ENCODE measurements at regions of chr4 and their contacts with region 1.

Region 1: DNA sequence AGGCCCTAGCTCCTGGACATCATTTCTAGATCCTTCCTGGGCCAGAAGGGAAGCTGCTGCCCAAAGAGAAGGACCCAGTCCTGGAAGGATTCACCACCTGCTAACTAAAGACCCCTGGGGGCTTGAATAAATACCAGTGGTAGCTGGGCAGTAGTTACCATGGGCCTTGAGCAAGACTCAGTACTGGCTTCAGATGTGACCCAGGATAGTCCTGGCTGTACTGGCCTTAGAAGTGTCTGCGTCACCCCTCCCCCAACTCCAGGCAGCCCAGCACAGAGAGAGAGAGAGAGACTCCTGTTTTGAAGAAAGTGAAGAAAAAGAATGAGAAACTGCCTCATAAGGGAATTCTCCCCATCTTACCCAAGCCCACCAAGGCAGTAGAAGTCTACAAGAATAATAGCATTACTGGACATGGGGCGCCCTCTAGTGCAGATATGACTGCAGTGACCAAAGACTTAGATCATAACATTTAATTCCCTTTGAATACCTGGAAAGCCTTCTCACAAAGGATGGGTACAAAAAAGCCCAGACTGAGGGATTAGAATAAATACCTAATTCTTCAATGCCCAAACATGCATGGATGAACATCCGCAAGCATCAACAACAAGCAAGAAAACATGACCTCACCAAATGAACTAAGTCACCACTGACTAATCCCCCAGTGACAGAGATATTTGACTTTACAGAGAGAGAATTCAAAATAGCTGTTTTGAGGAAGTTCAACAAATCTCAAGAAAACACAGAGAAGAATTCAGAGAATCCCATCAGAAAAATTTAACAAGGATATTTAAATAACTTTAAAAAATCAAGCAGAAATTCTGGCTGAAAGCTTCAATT is 171.8 kb downstream of the HNRNPD start:
- DNase-seq: peak; percentile 59
- H3K4me3 ChIP-seq: no peak overlapping the region
- H3K27ac ChIP-seq: no peak overlapping the region
- H3K4me1 ChIP-seq: no peaks in the 10 kb centered on the region
- H3K27me3 ChIP-seq: no peaks in the 10 kb centered on the region
- CTCF ChIP-seq: peak; percentile 56 to 58
- POLR2A ChIP-seq: no peak

Region 2: GRCh38 chr4:81405894-81406401 is 796.1 kb before region 1 on chr4:
- CTCF ChIA-PET with region 1: interaction called, 4 read pairs
- POLR2A ChIA-PET with region 1: no interaction called
- dilution Hi-C with region 1: no loop called
- intact Hi-C with region 1: loop called (anchors 1 kb)
- DNase-seq: peak; percentile 72
- H3K4me3 ChIP-seq: no peak overlapping the region
- H3K27ac ChIP-seq: no peak overlapping the region
- H3K4me1 ChIP-seq: no peaks in the 10 kb centered on the region
- H3K27me3 ChIP-seq: no peaks in the 10 kb centered on the region
- CTCF ChIP-seq: peak; percentile 32 to 33
- POLR2A ChIP-seq: no peak

Region 3: DNA sequence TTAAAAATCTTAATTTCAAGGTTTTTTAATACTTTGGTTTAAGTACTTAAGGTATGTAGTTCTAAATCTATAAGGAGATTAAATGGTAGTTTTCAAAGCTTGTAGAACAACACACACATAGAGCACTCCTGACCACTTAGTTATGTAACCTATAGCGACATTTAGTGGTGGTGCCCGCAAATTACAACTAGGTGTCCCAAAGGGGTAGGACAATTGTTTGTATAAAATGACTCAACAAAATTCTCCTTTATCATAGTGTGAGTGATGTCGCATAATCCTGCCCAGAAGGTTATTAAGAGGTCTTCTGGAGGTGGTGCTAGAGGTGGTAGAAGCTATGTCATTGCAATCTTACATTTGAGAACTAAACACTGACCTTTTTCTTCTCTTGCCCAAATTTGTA is 357.3 kb before region 1 on chr4:
- CTCF ChIA-PET with region 1: no interaction called
- POLR2A ChIA-PET with region 1: no interaction called
- dilution Hi-C with region 1: no loop called
- intact Hi-C with region 1: loop called (anchors 2 kb)
- DNase-seq: peak; percentile 79
- H3K4me3 ChIP-seq: no peak overlapping the region
- H3K27ac ChIP-seq: no peak overlapping the region
- H3K4me1 ChIP-seq: no peaks in the 10 kb centered on the region
- H3K27me3 ChIP-seq: no peaks in the 10 kb centered on the region
- CTCF ChIP-seq: peak; percentile 55 to 57
- POLR2A ChIP-seq: no peak

Region 4: DNA sequence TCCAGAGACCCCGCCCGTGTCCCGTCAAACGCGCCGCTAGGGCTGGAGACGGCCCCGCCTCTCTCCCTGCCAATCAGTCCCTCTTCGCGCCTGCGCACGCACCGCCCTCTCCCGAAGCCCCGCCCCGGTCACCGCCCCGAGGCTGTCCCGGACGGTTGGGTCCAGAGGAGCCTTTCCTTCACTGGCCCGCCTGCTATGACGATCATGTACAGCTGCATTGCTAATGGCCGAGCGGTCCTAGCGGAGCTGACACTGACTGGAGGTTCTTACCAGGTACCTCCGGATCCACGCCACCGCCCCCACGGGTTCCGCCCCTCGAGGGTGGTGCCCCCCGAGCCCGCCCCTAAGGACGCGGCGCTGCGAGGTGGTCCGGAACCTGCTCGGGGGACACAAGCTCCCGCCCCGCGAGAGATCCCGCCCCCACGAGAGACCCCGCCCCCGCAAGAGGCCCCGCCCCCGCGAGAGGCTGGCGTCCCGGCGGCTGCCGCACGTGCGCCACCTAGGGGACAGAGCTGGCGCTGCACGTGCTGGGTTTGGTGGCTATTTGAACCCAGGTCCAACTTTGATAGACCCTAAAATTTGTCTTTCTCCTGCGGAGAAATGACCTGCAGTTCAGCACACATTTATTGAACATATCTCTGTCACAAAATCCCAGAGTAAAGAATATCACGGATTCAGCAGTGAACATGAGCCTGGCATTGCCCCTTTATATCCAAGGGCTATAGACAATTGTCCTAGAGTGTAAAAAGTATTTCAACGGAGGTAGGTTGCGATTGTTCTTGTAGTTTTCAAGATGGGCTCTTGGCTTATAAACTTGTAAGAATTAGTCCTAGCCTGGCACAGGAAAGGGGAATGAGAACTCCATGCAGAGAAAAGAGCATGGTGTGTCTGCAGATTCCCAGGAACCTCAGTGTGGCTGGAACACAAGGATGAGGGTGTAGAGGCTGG is 83.1 kb after region 1 on chr4:
- CTCF ChIA-PET with region 1: no interaction called
- POLR2A ChIA-PET with region 1: no interaction called
- dilution Hi-C with region 1: no loop called
- intact Hi-C with region 1: no loop called
- DNase-seq: peak; percentile 99
- H3K4me3 ChIP-seq: peak overlapping the region in 2 of 3 experiments; percentile 40 to 44
- H3K27ac ChIP-seq: no peak overlapping the region
- H3K4me1 ChIP-seq: peaks cover 6% of the 10 kb centered on the region
- H3K27me3 ChIP-seq: peaks cover 13 to 16% of the 10 kb centered on the region in 2 experiments
- CTCF ChIP-seq: peak; percentile 69 to 90
- POLR2A ChIP-seq: no peak

Region 5: DNA sequence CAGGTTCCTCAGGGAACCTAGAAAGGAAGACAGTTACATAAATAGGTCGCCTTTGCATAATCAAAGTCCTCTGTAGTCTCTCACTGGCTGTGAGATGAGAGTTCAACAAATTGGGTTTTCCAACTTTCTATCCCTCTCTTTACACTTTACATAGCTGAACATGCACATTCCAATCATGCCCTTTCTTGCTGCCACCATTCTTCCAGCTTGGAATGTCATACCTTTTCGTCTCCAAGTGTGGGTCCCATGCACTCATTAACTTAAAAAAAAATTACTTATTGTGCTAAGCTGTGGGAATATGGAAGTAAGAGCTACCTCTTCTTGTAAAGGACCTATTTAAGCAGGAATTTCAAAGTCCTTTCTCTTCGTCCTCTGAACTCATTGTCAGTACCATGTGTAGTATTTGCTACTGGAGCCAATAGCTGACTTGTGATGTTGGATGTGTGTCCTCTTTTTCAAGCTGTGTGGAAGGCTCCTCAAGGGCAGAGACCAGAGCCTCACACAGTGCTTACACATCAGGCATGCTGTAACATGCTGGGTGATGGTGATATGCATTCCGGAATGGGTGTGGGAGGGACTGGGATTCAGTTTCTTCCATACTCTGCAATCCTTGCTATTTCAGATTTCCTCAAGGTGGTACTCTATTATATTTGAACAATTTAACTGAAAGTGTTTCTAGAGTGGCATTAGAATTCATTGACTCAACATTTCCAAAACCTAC is 235.4 kb after region 1 on chr4:
- CTCF ChIA-PET with region 1: no interaction called
- POLR2A ChIA-PET with region 1: no interaction called
- dilution Hi-C with region 1: no loop called
- intact Hi-C with region 1: no loop called
- DNase-seq: no peak
- H3K4me3 ChIP-seq: no peak overlapping the region
- H3K27ac ChIP-seq: no peak overlapping the region
- H3K4me1 ChIP-seq: no peaks in the 10 kb centered on the region
- H3K27me3 ChIP-seq: no peaks in the 10 kb centered on the region
- CTCF ChIP-seq: no peak
- POLR2A ChIP-seq: no peak

Measured in endothelial cell of umbilical vein (primary cell).